ENCODE measurements at regions of chr12 and their contacts with region 1.

Region 1: DNA sequence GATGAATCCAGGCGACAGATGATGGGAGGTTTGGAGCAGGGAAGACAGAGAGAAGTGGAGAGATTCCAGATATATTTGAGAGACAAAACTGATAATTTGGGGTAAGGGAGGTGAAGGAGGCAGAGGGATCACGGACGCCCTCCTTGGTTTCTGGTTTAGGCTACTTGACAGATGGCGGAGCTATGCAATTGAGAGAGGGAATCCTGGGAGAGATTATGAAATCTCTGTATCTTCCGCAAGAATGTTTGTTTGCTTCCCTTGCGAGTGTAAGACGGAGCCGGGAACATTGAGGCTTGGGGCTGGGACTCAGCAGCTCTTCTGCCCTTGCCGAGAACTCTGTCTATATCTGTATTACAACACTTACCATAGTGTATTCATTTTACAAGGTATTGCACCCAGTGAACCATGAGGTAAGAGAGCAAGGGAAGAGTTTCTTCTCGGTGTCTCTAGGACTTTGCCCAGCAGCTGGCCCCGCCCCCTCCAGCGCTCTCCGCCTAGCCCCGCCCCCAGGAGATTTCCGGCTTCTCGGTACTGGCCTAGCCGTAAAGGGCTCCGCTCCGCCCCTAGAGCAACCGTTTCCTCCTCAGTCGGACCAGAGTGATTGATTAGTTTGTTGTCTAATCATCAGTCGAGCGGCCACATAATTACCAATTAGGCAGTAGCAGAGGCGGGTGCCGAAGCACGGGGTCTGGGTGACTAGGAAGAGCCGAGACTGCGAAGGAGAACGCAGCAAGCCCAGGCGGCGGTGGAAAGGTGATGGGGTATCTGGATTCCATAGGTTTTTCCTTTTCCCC is at the start of gene PRR13:
- DNase-seq: peak; percentile 96
- H3K4me3 Mint-ChIP-seq: peak within 1 kb of the TSS; percentile 89
- H3K27ac Mint-ChIP-seq: peak within 1 kb of the TSS; percentile 86
- H3K4me1 Mint-ChIP-seq: peaks cover 35% of the 10 kb centered on the region
- H3K27me3 Mint-ChIP-seq: no peaks in the 10 kb centered on the region
- total RNA-seq, gene PRR13: 206 and 219 TPM in 2 replicates

Region 2: GRCh38 chr12:53205747-53206419 is 235.4 kb before region 1 on chr12:
- intact Hi-C with region 1: loop called (anchors 5 kb)
- DNase-seq: peak; percentile 74
- H3K4me3 Mint-ChIP-seq: peak overlapping the region; percentile 82
- H3K27ac Mint-ChIP-seq: peak overlapping the region; percentile 90
- H3K4me1 Mint-ChIP-seq: peaks cover 67% of the 10 kb centered on the region
- H3K27me3 Mint-ChIP-seq: no peaks in the 10 kb centered on the region

Region 3: GRCh38 chr12:53352331-53353256 is 88.6 kb before region 1 on chr12:
- intact Hi-C with region 1: loop called (anchors 1 kb)
- DNase-seq: peak; percentile 78
- H3K4me3 Mint-ChIP-seq: no peak overlapping the region
- H3K27ac Mint-ChIP-seq: peak overlapping the region; percentile 47
- H3K4me1 Mint-ChIP-seq: peaks cover 10% of the 10 kb centered on the region
- H3K27me3 Mint-ChIP-seq: no peaks in the 10 kb centered on the region

Region 4: GRCh38 chr12:53500776-53501614 is 59.8 kb after region 1 on chr12 and contains the start of gene TARBP2:
- intact Hi-C with region 1: loop called (anchors 1 kb)
- DNase-seq: peak; percentile 93
- H3K4me3 Mint-ChIP-seq: peak within 1 kb of the TSS; percentile 95
- H3K27ac Mint-ChIP-seq: peak within 1 kb of the TSS; percentile 98
- H3K4me1 Mint-ChIP-seq: peaks cover 53% of the 10 kb centered on the region
- H3K27me3 Mint-ChIP-seq: peaks cover 2% of the 10 kb centered on the region
- total RNA-seq, gene TARBP2: 47.7 and 48.2 TPM in 2 replicates

Region 5: GRCh38 chr12:53543539-53543938 is 102.3 kb after region 1 on chr12:
- intact Hi-C with region 1: no loop called
- DNase-seq: peak; percentile 38
- H3K4me3 Mint-ChIP-seq: no peak overlapping the region
- H3K27ac Mint-ChIP-seq: peak overlapping the region; percentile 75
- H3K4me1 Mint-ChIP-seq: peaks cover 13% of the 10 kb centered on the region
- H3K27me3 Mint-ChIP-seq: no peaks in the 10 kb centered on the region